ENCODE measurements at regions of chr11 and their contacts with region 1.

Region 1: GRCh38 chr11:6353367-6353987 is 33.2 kb upstream of the CAVIN3 start:
- DNase-seq: no peak
- H3K4me3 ChIP-seq: no peak overlapping the region
- H3K27me3 ChIP-seq: no peaks in the 10 kb centered on the region
- CTCF ChIP-seq: peak; percentile 95

Region 2: GRCh38 chr11:6234387-6235107 is 118.9 kb before region 1 on chr11 and contains the start of gene FHIP1B:
- CTCF ChIA-PET with region 1: interaction called, 10 read pairs
- POLR2A ChIA-PET with region 1: no interaction called
- DNase-seq: peak; percentile 99
- H3K4me3 ChIP-seq: peak within 1 kb of the TSS; percentile 97
- H3K27me3 ChIP-seq: 0 out of 2 replicates have a peak, but pooled peaks cover 2% of the 10 kb centered on the region
- CTCF ChIP-seq: no peak
- polyA plus RNA-seq, gene FHIP1B: 22.1 and 30.6 TPM in 2 replicates

Region 3: GRCh38 chr11:6251120-6251733 is 102.2 kb before region 1 on chr11:
- CTCF ChIA-PET with region 1: interaction called, 138 read pairs
- POLR2A ChIA-PET with region 1: no interaction called
- DNase-seq: peak; percentile 18
- H3K4me3 ChIP-seq: no peak overlapping the region
- H3K27me3 ChIP-seq: peaks cover under 1% of the 10 kb centered on the region
- CTCF ChIP-seq: peak; percentile 96

Region 4: GRCh38 chr11:6285019-6285418 is 68.5 kb before region 1 on chr11:
- CTCF ChIA-PET with region 1: interaction called, 12 read pairs
- POLR2A ChIA-PET with region 1: no interaction called
- DNase-seq: no peak
- H3K4me3 ChIP-seq: no peak overlapping the region
- H3K27me3 ChIP-seq: peaks cover 4% of the 10 kb centered on the region; the same call in 1 of the 2 replicates
- CTCF ChIP-seq: no peak

Region 5: DNA sequence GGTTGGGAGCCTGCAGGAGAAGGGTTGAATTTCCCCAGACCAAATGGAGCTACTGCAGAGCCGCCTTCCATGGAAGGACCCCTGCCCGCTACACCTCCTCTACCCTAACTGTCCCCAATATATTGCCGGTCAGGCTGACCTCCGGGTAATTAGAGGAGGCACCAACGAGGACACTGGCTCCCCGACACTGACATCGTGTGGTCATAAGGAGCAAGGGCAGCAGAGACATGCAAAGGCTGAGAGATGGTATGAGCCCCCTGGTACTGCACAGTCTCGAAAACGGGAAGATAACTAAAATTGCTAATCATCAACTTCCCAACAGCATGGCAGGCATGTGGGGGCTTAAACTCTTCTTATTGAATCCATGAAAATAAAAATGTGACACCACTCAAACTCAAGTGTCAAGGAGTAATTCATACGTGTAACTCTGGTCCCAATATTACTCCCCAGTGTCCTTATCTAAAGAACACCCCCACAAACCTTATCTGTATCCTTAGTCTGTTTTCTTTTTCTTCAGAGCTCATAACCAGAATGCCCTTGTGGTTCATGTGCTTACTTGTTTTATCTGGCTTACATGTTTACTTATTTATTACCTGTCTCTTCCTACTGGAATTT is 37.6 kb before region 1 on chr11:
- CTCF ChIA-PET with region 1: interaction called, 62 read pairs
- POLR2A ChIA-PET with region 1: interaction called, 4 read pairs
- DNase-seq: no peak
- H3K4me3 ChIP-seq: no peak overlapping the region
- H3K27me3 ChIP-seq: no peaks in the 10 kb centered on the region
- CTCF ChIP-seq: peak; percentile 93

Region 6: DNA sequence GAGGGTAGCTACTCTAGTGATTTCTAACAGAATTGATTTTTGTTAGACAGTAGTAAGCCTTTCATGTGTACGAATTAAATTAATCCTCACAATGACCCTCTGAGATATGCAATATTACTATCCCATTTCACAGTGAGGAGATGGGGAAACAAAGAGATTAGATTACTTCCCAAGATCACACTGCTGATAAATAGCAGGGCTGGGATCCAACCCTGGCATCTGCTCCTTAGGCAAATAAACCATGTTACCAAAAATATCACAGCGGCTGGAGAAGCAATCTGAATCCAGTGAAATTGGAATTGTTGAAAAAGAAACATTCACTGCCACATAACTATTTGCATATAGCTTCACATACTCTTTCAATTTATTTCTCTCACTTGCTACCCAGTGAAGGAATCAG is 20.4 kb before region 1 on chr11:
- CTCF ChIA-PET with region 1: interaction called, 62 read pairs
- POLR2A ChIA-PET with region 1: no interaction called
- DNase-seq: no peak
- H3K4me3 ChIP-seq: no peak overlapping the region
- H3K27me3 ChIP-seq: no peaks in the 10 kb centered on the region
- CTCF ChIP-seq: no peak

Measured in BJ (cell line).